ENCODE measurements at regions of chr21 and their contacts with region 1.

Region 1: GRCh38 chr21:39033878-39034602 is 149.2 kb downstream of the PSMG1 start:
- DNase-seq: no peak

Region 2: GRCh38 chr21:37783016-37783415 is 1251.0 kb before region 1 on chr21:
- intact Hi-C with region 1: loop called in 1 of 2 experiments (anchors 5 kb)
- DNase-seq: no peak